Heart left ventricle (tissue), 16 donors: ENCODE measurements at regions of chr2 and their contacts with region 1.

Region 1: GRCh38 chr2:164859251-164859800 is 17.7 kb upstream of the COBLL1 start:
- DNase-seq: no peak
- ATAC-seq: no peak
- H3K4me3 ChIP-seq: no peak overlapping the region
- H3K27ac ChIP-seq: no peak overlapping the region
- H3K4me1 ChIP-seq: no peaks in the 10 kb centered on the region
- H3K27me3 ChIP-seq: no peaks in the 10 kb centered on the region
- CTCF ChIP-seq: no peak
- POLR2A ChIP-seq: no peak

Region 2: DNA sequence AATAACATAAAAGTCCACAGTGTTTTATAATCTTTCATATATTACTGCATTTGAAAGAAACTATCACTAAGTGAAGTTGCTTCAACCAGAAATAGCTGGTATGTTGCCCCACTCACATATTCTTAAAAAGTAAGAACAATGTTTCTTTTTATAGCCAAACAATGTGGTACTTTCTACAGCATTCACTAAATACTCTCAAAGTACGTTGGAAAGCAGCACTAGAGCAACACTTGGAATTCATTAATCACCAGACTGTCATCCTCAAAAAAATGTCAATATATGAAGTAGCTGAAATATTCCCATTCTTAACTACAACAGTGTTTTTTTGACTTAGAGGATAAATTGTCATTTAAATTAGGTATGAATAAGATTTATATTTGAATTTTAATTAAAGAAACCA is 50.5 kb before region 1 on chr2:
- intact Hi-C with region 1: no loop called
- DNase-seq: no peak
- ATAC-seq: no peak
- H3K4me3 ChIP-seq: no peak overlapping the region
- H3K27ac ChIP-seq: peak overlapping the region in 3 of 12 donors; percentile 4 to 37 (median 4)
- H3K4me1 ChIP-seq: peaks cover 0 to 61% (median 28%) of the 10 kb centered on the region in 12 donors
- H3K27me3 ChIP-seq: no peaks in the 10 kb centered on the region
- CTCF ChIP-seq: no peak
- POLR2A ChIP-seq: no peak

Region 3: GRCh38 chr2:164896634-164897355 is 37.5 kb after region 1 on chr2:
- intact Hi-C with region 1: loop called in 1 of 10 experiments (anchors 5 kb)
- DNase-seq: no peak
- ATAC-seq: no peak
- H3K4me3 ChIP-seq: no peak overlapping the region
- H3K27ac ChIP-seq: no peak overlapping the region
- H3K4me1 ChIP-seq: peaks cover 0 to 9% (median 0%) of the 10 kb centered on the region in 12 donors
- H3K27me3 ChIP-seq: no peaks in the 10 kb centered on the region
- CTCF ChIP-seq: no peak
- POLR2A ChIP-seq: no peak